MCF 10A (cell line): ENCODE measurements at regions of chr22 and their contacts with region 1.

Region 1: DNA sequence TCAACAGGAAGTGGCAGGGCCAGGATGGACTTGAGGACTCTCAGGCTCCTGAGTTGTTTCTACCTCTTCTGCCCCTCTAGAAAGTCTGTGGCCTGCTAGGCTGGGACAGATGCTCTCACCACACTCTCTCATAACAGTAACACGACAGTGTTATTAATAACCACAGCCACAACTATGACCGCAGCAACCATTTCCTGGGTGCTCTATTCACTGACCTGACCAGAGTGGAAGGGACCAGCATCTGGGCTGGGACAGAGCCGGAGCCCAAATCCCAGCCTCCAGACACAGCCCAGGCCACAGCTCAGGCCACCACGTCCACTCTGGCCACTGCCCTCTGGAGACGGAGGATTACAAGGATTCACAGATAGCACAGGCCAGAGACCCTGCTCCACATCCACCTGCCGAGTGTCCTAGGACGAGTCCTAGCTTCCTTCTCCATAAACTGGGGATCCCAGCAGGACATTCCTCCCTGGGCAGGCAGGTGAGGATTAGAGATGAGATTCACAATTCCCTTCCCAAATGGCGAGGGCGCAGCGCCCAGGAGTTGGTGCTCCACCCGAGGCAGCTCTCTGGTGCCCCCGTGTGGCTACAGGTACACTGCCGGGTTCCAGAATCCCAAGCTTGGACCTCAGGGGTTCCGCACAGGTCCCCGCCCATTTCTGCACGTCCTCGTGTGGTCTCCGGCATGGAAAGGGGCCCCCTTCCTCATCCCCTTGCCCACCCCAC is 7.0 kb downstream of the PNPLA5 start:
- DNase-seq: peak; percentile 59
- H3K4me3 Mint-ChIP-seq: no peak overlapping the region
- H3K27ac Mint-ChIP-seq: no peak overlapping the region
- H3K4me1 Mint-ChIP-seq: no peaks in the 10 kb centered on the region
- H3K27me3 Mint-ChIP-seq: peaks cover 31% of the 10 kb centered on the region
- CTCF ChIP-seq: peak; percentile 83

Region 2: DNA sequence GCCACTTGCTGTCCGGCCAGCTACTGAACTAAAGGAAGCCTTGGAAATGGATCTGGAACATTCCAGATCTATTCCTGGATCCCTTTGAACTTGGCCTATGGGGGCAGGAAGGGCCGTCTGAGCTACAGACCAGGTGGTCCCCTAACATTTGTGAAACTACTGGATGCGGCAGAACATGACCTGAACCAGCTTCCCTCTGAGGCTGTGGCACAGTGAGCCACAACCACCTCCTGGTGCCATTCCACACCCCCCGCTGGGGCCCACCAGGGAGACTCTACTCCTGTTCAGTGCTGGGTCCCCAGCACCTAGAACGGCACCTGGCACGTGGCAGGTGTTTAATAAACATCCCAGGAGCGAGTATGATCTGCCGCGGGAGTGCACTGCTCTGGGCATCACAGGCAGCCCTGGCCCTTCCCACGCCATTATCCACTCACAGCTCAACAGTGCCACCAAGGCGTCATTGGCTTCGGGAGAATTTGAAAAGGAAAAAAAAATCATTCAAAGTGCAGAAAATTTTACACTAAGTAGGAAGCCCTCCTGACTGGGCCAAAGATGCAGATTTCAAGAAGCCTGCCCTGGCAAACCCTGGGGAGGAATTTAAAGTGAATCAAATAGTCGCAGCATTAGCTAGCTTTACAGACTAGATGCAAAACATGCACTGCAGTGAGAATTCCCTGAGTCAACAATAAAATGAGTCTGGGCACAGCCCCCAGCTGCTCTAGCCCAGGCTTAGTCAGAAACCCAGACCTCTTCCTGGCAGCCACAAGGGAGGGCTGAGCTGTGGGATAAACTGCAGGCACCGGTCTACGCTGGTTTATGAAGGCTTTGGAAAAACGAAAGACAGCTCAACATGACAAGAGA is 58.4 kb before region 1 on chr22:
- CTCF ChIA-PET with region 1: interaction called, 10 read pairs
- POLR2A ChIA-PET with region 1: no interaction called
- intact Hi-C with region 1: no loop called
- DNase-seq: peak; percentile 18
- H3K4me3 Mint-ChIP-seq: no peak overlapping the region
- H3K27ac Mint-ChIP-seq: no peak overlapping the region
- H3K4me1 Mint-ChIP-seq: no peaks in the 10 kb centered on the region
- H3K27me3 Mint-ChIP-seq: peaks cover 63% of the 10 kb centered on the region
- CTCF ChIP-seq: peak; percentile 29

Region 3: GRCh38 chr22:43897751-43898261 is 13.0 kb after region 1 on chr22:
- CTCF ChIA-PET with region 1: interaction called, 38 read pairs
- POLR2A ChIA-PET with region 1: no interaction called
- intact Hi-C with region 1: no loop called
- DNase-seq: no peak
- H3K4me3 Mint-ChIP-seq: no peak overlapping the region
- H3K27ac Mint-ChIP-seq: no peak overlapping the region
- H3K4me1 Mint-ChIP-seq: peaks cover 13% of the 10 kb centered on the region
- H3K27me3 Mint-ChIP-seq: no peaks in the 10 kb centered on the region
- CTCF ChIP-seq: no peak

Region 4: GRCh38 chr22:43945632-43946383 is 61.0 kb after region 1 on chr22:
- CTCF ChIA-PET with region 1: interaction called, 20 read pairs
- POLR2A ChIA-PET with region 1: no interaction called
- intact Hi-C with region 1: loop called (anchors 1 kb)
- DNase-seq: peak; percentile 69
- H3K4me3 Mint-ChIP-seq: no peak overlapping the region
- H3K27ac Mint-ChIP-seq: no peak overlapping the region
- H3K4me1 Mint-ChIP-seq: no peaks in the 10 kb centered on the region
- H3K27me3 Mint-ChIP-seq: no peaks in the 10 kb centered on the region
- CTCF ChIP-seq: peak; percentile 52

Region 5: DNA sequence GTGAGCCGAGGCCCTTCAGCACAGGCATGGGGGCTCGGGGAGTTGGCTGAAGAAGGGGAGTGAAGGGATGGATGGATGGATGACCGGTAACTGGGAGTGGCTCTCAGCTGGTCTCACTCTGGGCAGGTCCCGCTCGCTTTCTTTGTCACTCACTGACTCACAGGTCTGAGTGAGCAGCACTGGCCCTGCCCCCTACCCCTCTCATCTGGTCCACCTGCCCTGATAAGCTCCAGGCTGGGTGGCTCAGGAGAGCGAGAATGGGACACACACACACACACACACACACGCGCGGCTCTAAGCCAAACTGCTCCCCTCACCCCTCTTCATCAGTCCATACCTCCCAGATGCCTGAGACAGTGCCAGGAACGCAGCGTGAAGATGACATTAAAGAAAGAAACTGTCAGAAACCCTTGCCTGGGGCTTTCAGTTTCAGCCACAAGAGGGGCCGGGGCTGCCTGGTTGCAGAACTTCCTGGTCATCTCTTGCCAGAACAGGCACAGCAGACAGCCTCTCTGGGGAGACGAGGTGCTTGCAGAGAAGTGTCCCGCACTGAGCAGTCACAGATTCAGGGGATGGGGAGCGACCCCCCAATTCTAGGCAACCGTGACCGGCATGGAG is 444.5 kb after region 1 on chr22:
- CTCF ChIA-PET with region 1: no interaction called
- POLR2A ChIA-PET with region 1: no interaction called
- intact Hi-C with region 1: no loop called
- DNase-seq: no peak
- H3K4me3 Mint-ChIP-seq: no peak overlapping the region
- H3K27ac Mint-ChIP-seq: no peak overlapping the region
- H3K4me1 Mint-ChIP-seq: peaks cover 22% of the 10 kb centered on the region
- H3K27me3 Mint-ChIP-seq: peaks cover 13% of the 10 kb centered on the region
- CTCF ChIP-seq: no peak